ENCODE measurements at regions of chr19 and their contacts with region 1.

Region 1: DNA sequence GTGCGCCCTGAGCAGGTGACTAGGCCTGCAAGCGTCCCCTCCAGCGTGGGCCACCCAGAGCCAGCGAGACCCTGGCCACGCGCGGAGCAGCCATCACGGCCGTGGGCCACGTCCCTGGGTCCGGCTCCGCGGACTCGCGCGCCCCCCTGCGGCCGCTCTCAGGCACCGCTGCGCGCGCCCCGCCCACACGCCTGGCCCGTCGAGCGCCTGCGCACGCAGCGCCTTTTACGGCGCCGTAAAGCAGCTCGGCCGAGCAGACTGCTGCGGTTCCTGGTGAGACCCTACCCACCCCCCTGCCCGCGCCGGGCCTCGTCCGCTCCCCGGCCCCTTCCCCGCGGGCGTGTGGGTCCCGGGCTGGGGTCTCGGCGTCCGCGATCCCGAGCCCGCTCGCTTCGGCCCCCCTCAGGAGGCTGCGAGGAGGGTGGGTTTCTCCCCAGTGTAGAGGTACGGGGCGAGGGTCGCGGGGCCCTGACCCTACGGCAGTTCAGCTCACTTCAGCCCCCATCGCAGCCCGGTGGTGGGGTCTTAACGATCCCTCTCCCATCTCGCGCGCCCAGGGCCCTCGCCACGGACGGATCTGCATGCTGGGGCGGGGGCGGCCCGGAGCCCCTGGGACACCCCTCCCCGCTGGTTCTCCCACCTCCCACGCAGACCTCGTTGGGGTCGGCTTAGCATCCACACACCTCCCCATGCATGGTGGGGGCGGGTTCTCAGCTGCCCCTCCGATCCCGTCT is at the start of gene TRAPPC5:
- DNase-seq: peak; percentile 93
- ATAC-seq: peak; percentile 89 to 96
- H3K4me3 ChIP-seq: peak within 1 kb of the TSS; percentile 100
- H3K27ac ChIP-seq: peak within 1 kb of the TSS; percentile 92
- H3K4me1 ChIP-seq: peaks cover 14% of the 10 kb centered on the region
- H3K27me3 ChIP-seq: no peaks in the 10 kb centered on the region
- CTCF ChIP-seq: peak; percentile 99
- total RNA-seq, gene TRAPPC5: 75.3 TPM

Region 2: GRCh38 chr19:7562646-7563393 is 118.0 kb before region 1 on chr19:
- intact Hi-C with region 1: loop called (anchors 2 kb)
- DNase-seq: no peak
- ATAC-seq: no peak
- H3K4me3 ChIP-seq: no peak overlapping the region
- H3K27ac ChIP-seq: no peak overlapping the region
- H3K4me1 ChIP-seq: no peaks in the 10 kb centered on the region
- H3K27me3 ChIP-seq: no peaks in the 10 kb centered on the region
- CTCF ChIP-seq: no peak

Region 3: GRCh38 chr19:7637374-7638256 is 43.2 kb before region 1 on chr19:
- intact Hi-C with region 1: no loop called
- DNase-seq: peak; percentile 89
- ATAC-seq: peak; percentile 77 to 83
- H3K4me3 ChIP-seq: peak overlapping the region; percentile 86
- H3K27ac ChIP-seq: peak overlapping the region; percentile 96
- H3K4me1 ChIP-seq: peaks cover 30% of the 10 kb centered on the region
- H3K27me3 ChIP-seq: peaks cover 7% of the 10 kb centered on the region
- CTCF ChIP-seq: no peak

Region 4: GRCh38 chr19:7919610-7920518 is 239.1 kb after region 1 on chr19 and contains the start of gene SNAPC2:
- intact Hi-C with region 1: no loop called
- DNase-seq: peak; percentile 98
- ATAC-seq: peak; percentile 82 to 84
- H3K4me3 ChIP-seq: peak within 1 kb of the TSS; percentile 80
- H3K27ac ChIP-seq: peak within 1 kb of the TSS; percentile 83
- H3K4me1 ChIP-seq: peaks cover 57% of the 10 kb centered on the region
- H3K27me3 ChIP-seq: peaks cover 40% of the 10 kb centered on the region
- CTCF ChIP-seq: no peak
- total RNA-seq, gene SNAPC2: 17.6 TPM